CD8-positive, alpha-beta T cell (primary cell): ENCODE measurements at regions of chr2 and their contacts with region 1.

Region 1: DNA sequence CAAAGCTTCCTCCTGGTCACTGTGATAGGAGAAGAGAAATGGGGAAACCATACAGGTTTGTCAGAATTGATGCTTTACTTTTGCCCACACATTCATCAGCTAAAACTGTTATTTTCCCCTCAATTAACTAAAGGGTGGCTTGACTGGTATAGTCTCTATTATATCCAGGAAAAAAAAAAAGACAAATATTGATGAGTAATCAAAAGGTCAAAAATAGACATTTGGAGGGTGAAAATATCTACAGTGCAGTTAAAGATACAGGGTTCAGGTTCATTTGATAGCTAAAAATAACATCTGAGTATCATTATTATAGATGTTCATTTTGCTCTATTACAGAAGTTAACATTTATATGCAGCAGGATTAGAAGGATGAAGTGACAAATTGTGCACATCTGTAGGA is 577.6 kb upstream of the FAM98A start:
- DNase-seq: no peak
- ATAC-seq: no peak
- H3K4me3 ChIP-seq: no peak overlapping the region
- H3K4me3 Mint-ChIP-seq: no peak overlapping the region
- H3K27ac ChIP-seq: no peak overlapping the region
- H3K27ac Mint-ChIP-seq: no peak overlapping the region
- H3K4me1 ChIP-seq: no peaks in the 10 kb centered on the region
- H3K4me1 Mint-ChIP-seq: no peaks in the 10 kb centered on the region
- H3K27me3 ChIP-seq: no peaks in the 10 kb centered on the region
- H3K27me3 Mint-ChIP-seq: no peaks in the 10 kb centered on the region
- CTCF ChIP-seq: no peak

Region 2: DNA sequence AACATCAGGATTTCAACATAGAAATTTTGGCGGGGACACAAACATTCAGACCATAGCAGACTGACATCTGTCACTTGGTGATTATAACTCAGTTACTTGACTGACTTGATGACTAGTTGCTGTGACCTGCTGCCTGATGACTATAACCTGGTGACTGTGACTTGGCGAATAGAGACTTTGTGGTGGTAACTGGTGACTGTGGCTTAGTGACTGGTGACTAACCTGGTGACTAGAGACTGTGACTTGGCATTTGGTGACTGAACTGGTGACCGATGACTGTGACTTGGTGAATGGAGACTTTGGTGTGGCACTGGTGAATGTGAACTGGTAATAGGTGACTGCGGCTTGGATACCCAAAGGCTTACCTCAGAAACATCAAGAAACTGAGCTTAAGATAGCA is 14.5 kb before region 1 on chr2:
- CTCF ChIA-PET with region 1: interaction called, 4 read pairs
- POLR2A ChIA-PET with region 1: interaction called, 11 read pairs
- intact Hi-C with region 1: no loop called
- DNase-seq: no peak
- ATAC-seq: no peak
- H3K4me3 ChIP-seq: no peak overlapping the region
- H3K4me3 Mint-ChIP-seq: no peak overlapping the region
- H3K27ac ChIP-seq: no peak overlapping the region
- H3K27ac Mint-ChIP-seq: no peak overlapping the region
- H3K4me1 ChIP-seq: no peaks in the 10 kb centered on the region
- H3K4me1 Mint-ChIP-seq: no peaks in the 10 kb centered on the region
- H3K27me3 ChIP-seq: no peaks in the 10 kb centered on the region
- H3K27me3 Mint-ChIP-seq: no peaks in the 10 kb centered on the region
- CTCF ChIP-seq: no peak

Region 3: DNA sequence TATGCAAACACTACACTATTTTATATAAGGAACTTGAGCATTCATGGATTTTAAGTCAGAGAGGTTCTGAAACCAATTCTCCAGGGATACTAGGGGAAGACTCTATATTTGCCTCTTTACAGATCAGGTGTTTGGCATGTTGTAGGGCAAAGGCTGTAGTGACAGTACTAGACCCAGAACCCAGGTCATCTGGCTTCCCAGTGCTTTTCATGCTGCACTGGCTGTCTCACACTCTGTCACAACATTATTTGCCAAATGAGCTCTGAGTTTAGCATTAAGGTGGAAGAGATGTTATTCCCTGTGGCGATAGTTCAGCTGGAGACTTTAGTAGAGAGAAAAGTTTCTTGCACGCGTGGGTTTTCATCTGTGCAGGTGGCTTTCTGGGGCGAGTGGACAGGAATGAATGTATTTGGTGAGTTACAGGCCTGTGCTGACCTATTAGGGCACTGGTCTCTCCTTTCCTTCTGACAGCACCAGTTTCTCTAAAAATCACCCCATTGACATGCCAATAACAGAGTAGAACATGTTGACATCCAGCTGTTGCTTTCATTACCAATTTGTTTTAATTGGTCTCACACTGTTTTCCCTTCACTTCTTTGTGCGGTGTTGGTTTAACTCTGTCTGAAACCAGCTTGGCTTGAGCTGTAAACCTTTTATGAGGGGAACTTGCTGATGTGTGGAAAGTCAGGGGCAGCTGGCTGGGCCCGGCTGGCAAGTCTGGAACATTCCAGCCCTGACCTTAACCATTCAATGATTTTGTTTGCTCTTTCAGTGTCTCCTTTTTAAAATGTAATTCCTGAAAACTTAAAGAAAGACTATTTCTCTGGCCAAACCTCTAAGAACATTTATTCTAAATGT is 65.4 kb after region 1 on chr2:
- CTCF ChIA-PET with region 1: no interaction called
- POLR2A ChIA-PET with region 1: no interaction called
- intact Hi-C with region 1: no loop called
- DNase-seq: no peak
- ATAC-seq: no peak
- H3K4me3 ChIP-seq: no peak overlapping the region
- H3K4me3 Mint-ChIP-seq: no peak overlapping the region
- H3K27ac ChIP-seq: no peak overlapping the region
- H3K27ac Mint-ChIP-seq: no peak overlapping the region
- H3K4me1 ChIP-seq: no peaks in the 10 kb centered on the region
- H3K4me1 Mint-ChIP-seq: no peaks in the 10 kb centered on the region
- H3K27me3 ChIP-seq: no peaks in the 10 kb centered on the region
- H3K27me3 Mint-ChIP-seq: no peaks in the 10 kb centered on the region
- CTCF ChIP-seq: no peak